A673 (cell line): ENCODE measurements at regions of chr1 and their contacts with region 1.

Region 1: GRCh38 chr1:203227371-203228083 is 1.9 kb downstream of the CHIT1 start:
- DNase-seq: no peak
- H3K4me3 ChIP-seq: no peak overlapping the region
- H3K27ac ChIP-seq: no peak overlapping the region
- H3K4me1 ChIP-seq: no peaks in the 10 kb centered on the region
- H3K27me3 ChIP-seq: peaks cover 29% of the 10 kb centered on the region
- CTCF ChIP-seq: no peak

Region 2: GRCh38 chr1:203317429-203318250 is 90.1 kb after region 1 on chr1:
- CTCF ChIA-PET with region 1: no interaction called
- POLR2A ChIA-PET with region 1: interaction called, 13 read pairs
- intact Hi-C with region 1: no loop called
- DNase-seq: no peak
- H3K4me3 ChIP-seq: no peak overlapping the region
- H3K27ac ChIP-seq: peak overlapping the region; percentile 10
- H3K4me1 ChIP-seq: peaks cover 24% of the 10 kb centered on the region
- H3K27me3 ChIP-seq: no peaks in the 10 kb centered on the region
- CTCF ChIP-seq: no peak

Region 3: DNA sequence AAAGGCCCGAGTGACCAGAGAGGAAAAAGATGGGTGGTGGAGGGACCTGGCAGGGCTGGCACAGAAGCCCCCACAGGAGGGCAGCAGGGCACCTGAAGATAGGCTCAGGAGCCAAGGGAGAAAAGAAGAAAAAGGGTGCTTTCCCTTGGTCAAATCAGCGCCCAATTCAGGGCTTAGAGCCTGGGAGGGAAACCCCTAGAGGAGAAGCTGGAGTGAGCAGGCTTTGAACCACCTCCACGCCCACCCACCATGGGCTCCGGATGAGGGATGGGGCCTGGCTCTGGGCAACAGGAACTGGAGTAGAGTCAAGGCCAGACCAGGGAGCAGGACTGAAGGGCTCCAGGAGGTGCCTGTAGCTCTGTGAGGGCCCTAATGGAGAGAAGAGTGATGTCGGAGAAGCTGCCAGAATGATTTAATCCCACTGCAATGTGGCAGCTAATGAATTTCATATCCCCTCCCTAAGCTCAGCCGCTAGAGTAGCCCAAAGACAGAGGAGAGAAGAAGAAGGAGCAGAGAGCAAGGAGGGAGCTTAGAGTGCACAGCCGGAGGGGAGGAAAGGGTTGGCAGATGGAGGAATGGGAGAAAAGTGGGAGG is 236.0 kb after region 1 on chr1:
- CTCF ChIA-PET with region 1: no interaction called
- POLR2A ChIA-PET with region 1: no interaction called
- intact Hi-C with region 1: no loop called
- DNase-seq: no peak
- H3K4me3 ChIP-seq: no peak overlapping the region
- H3K27ac ChIP-seq: no peak overlapping the region
- H3K4me1 ChIP-seq: peaks cover 5% of the 10 kb centered on the region
- H3K27me3 ChIP-seq: no peaks in the 10 kb centered on the region
- CTCF ChIP-seq: no peak; the same call in 1 of the 2 replicates